Right ventricle myocardium superior (tissue), 1 donor: ENCODE measurements at regions of chr1 and their contacts with region 1.

Region 1: DNA sequence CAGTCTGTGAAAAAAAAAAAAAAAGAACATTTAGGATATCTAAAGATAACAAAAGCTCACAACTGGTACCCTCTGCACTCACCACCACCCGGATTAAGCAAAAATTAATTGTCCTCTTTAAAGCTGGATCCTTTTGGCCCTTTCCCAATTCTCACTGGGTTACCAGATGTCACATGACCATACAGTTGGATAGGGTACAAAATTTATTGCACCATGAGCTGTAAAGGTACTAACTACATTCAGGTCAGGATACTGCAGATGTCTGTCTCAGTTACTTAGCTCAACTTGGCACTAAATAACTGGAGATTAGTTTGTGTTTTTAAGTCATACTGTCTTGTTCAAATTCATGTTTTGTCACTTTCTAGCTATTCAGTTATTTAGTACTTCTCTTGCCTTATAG is 96.3 kb downstream of the GPATCH2 start:
- DNase-seq: no peak
- ATAC-seq: peak; percentile 20

Region 2: GRCh38 chr1:217453816-217454215 is 80.8 kb before region 1 on chr1:
- intact Hi-C with region 1: loop called (anchors 10 kb)
- DNase-seq: no peak
- ATAC-seq: peak; percentile 94